Naive thymus-derived CD4-positive, alpha-beta T cell (primary cell): ENCODE measurements at regions of chr10 and their contacts with region 1.

Region 1: DNA sequence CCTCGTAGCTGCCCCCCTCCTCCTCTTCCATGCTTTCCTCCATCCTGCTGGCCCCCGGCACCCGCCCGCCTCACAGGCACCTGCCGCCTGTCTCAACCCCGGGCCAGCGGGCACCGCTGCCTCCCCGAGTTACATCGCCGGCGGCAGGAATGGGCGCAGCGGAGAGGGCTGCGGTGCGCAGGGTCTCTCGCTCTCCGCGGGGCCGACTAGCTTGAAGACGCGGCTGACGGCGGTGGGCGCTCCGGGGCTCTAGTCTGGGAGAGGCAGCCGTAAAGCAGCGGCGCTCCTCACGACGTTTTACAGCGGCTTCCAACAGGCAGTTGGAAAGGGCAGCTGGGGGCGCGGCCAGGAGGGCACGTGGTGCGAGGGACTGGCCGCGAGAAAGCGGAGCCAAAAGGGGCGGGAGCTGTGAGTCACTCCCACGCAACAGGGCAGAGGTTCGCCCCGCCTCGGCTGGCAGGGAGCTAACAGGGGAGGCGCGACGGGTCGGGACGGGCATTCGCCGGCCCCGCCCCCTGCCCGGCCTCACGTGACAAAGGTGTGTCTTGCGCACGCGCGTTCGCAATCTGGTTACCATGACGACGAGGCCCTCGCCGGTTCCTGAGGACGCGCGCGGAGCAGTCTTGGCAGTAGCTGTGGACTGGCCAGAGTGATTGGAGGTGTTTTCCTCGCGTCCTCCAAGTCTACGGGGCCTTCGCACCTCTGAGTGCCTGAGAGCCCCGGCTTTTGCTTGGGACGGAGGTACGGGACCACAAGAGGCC is at the start of gene CACUL1:
- DNase-seq: peak; percentile 99 to 100 (median 100)
- ATAC-seq: peak; percentile 99
- H3K4me3 ChIP-seq: peak within 1 kb of the TSS; percentile 92
- H3K4me3 Mint-ChIP-seq: peak within 1 kb of the TSS; percentile 92 to 98 (median 95)
- H3K27ac ChIP-seq: peak within 1 kb of the TSS; percentile 80
- H3K27ac Mint-ChIP-seq: peak within 1 kb of the TSS; percentile 86 to 96 (median 92)
- H3K4me1 ChIP-seq: peaks cover 17 to 24% of the 10 kb centered on the region in 2 donors
- H3K4me1 Mint-ChIP-seq: peaks cover 24 to 47% (median 40%) of the 10 kb centered on the region in 7 donors
- H3K27me3 ChIP-seq: no peaks in the 10 kb centered on the region
- H3K27me3 Mint-ChIP-seq: peaks cover 0 to 19% (median 0%) of the 10 kb centered on the region in 5 donors
- total RNA-seq, gene CACUL1: 28.0 to 66.6 (median 34.3) TPM

Region 2: GRCh38 chr10:118046395-118047156 is 708.3 kb before region 1 on chr10 and contains the start of gene RAB11FIP2:
- CTCF ChIA-PET with region 1: no interaction called
- POLR2A ChIA-PET with region 1: interaction called, 4 read pairs
- intact Hi-C with region 1: loop called (anchors 1 kb)
- DNase-seq: peak; percentile 92 to 98 (median 95)
- ATAC-seq: peak; percentile 97
- H3K4me3 ChIP-seq: peak within 1 kb of the TSS; percentile 81
- H3K4me3 Mint-ChIP-seq: peak within 1 kb of the TSS; percentile 84 to 95 (median 88)
- H3K27ac ChIP-seq: peak within 1 kb of the TSS; percentile 83
- H3K27ac Mint-ChIP-seq: peak within 1 kb of the TSS; percentile 77 to 94 (median 85)
- H3K4me1 ChIP-seq: peaks cover 18 to 19% of the 10 kb centered on the region in 2 donors
- H3K4me1 Mint-ChIP-seq: peaks cover 17 to 54% (median 49%) of the 10 kb centered on the region in 7 donors
- H3K27me3 ChIP-seq: no peaks in the 10 kb centered on the region
- H3K27me3 Mint-ChIP-seq: peaks cover 0 to 20% (median 0%) of the 10 kb centered on the region in 5 donors
- total RNA-seq, gene RAB11FIP2: 17.5 to 32.6 (median 21.6) TPM

Region 3: GRCh38 chr10:118698421-118698820 is 56.5 kb before region 1 on chr10:
- CTCF ChIA-PET with region 1: no interaction called
- POLR2A ChIA-PET with region 1: interaction called, 12 read pairs
- intact Hi-C with region 1: loop called (anchors 1 kb)
- DNase-seq: peak; percentile 35 to 92 (median 88)
- ATAC-seq: peak; percentile 100
- H3K4me3 ChIP-seq: peak overlapping the region; percentile 18
- H3K4me3 Mint-ChIP-seq: peak overlapping the region; percentile 71 to 93 (median 83)
- H3K27ac ChIP-seq: peak overlapping the region; percentile 57
- H3K27ac Mint-ChIP-seq: peak overlapping the region; percentile 73 to 95 (median 90)
- H3K4me1 ChIP-seq: peaks cover 15 to 40% of the 10 kb centered on the region in 2 donors
- H3K4me1 Mint-ChIP-seq: peaks cover 29 to 89% (median 74%) of the 10 kb centered on the region in 7 donors
- H3K27me3 ChIP-seq: no peaks in the 10 kb centered on the region
- H3K27me3 Mint-ChIP-seq: no peaks in the 10 kb centered on the region

Region 4: GRCh38 chr10:119080521-119081260 is 325.8 kb after region 1 on chr10 and contains the start of gene EIF3A:
- CTCF ChIA-PET with region 1: no interaction called
- POLR2A ChIA-PET with region 1: interaction called, 3 read pairs
- intact Hi-C with region 1: loop called in 1 of 2 experiments (anchors 1 kb)
- DNase-seq: peak; percentile 87 to 98 (median 93)
- ATAC-seq: peak; percentile 90
- H3K4me3 ChIP-seq: peak within 1 kb of the TSS; percentile 83
- H3K4me3 Mint-ChIP-seq: peak within 1 kb of the TSS; percentile 86 to 99 (median 98)
- H3K27ac ChIP-seq: peak within 1 kb of the TSS; percentile 91
- H3K27ac Mint-ChIP-seq: peak within 1 kb of the TSS; percentile 93 to 100 (median 98)
- H3K4me1 ChIP-seq: peaks cover 6 to 26% of the 10 kb centered on the region in 2 donors
- H3K4me1 Mint-ChIP-seq: peaks cover 28 to 55% (median 45%) of the 10 kb centered on the region in 7 donors
- H3K27me3 ChIP-seq: no peaks in the 10 kb centered on the region
- H3K27me3 Mint-ChIP-seq: peaks cover 0 to 2% (median 0%) of the 10 kb centered on the region in 5 donors
- total RNA-seq, gene EIF3A: 87.8 to 137 (median 96.0) TPM

Region 5: DNA sequence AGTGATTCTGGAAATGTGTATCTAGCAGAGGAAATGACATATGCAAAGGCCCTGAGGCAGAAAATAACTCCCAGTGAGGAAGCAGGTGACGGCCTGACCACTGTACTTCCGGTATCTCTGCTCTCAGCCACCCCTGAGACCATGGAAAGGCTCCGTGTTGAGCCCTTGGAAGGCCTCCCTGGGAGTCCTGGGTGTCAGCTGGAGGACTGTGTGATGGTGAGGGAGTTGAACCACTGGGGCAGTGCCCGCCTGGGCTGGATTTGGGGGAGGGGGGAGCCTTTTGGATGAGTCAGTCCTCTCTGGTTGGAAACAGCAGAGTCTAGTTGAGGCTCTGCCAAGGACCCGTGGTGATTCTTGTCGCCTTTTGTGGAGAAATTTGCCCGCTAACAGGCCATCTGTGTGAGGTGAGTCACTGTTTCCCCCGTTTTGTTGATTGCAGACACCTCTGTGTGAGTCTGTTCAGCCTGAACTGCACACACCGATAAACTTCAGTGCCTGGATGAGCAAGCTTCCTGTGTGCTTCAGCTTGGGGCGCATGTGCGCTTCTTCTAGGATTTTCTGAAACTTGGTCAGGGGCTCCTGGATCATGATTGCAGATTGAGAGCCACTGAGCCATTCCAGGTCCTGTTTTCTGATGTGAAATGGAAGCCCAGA is 551.1 kb after region 1 on chr10:
- CTCF ChIA-PET with region 1: no interaction called
- POLR2A ChIA-PET with region 1: no interaction called
- intact Hi-C with region 1: loop called in 1 of 2 experiments (anchors 1 kb)
- DNase-seq: peak; percentile 38 to 93 (median 70)
- ATAC-seq: peak; percentile 85
- H3K4me3 ChIP-seq: peak overlapping the region; percentile 65
- H3K4me3 Mint-ChIP-seq: peak overlapping the region; percentile 71 to 93 (median 90)
- H3K27ac ChIP-seq: peak overlapping the region; percentile 90
- H3K27ac Mint-ChIP-seq: peak overlapping the region; percentile 94 to 99 (median 97)
- H3K4me1 ChIP-seq: peaks cover 47 to 53% of the 10 kb centered on the region in 2 donors
- H3K4me1 Mint-ChIP-seq: peaks cover 50 to 87% (median 74%) of the 10 kb centered on the region in 7 donors
- H3K27me3 ChIP-seq: no peaks in the 10 kb centered on the region
- H3K27me3 Mint-ChIP-seq: peaks cover 0 to 2% (median 0%) of the 10 kb centered on the region in 5 donors

Region 6: GRCh38 chr10:119872860-119873681 is 1118.2 kb after region 1 on chr10:
- CTCF ChIA-PET with region 1: no interaction called
- POLR2A ChIA-PET with region 1: interaction called, 5 read pairs
- intact Hi-C with region 1: loop called (anchors 1 to 5 kb)
- DNase-seq: peak; percentile 81 to 88 (median 86)
- ATAC-seq: peak; percentile 96
- H3K4me3 ChIP-seq: peak overlapping the region; percentile 97
- H3K4me3 Mint-ChIP-seq: peak overlapping the region; percentile 82 to 92 (median 89)
- H3K27ac ChIP-seq: peak overlapping the region; percentile 84
- H3K27ac Mint-ChIP-seq: peak overlapping the region; percentile 79 to 95 (median 92)
- H3K4me1 ChIP-seq: peaks cover 21 to 28% of the 10 kb centered on the region in 2 donors
- H3K4me1 Mint-ChIP-seq: peaks cover 23 to 46% (median 41%) of the 10 kb centered on the region in 7 donors
- H3K27me3 ChIP-seq: no peaks in the 10 kb centered on the region
- H3K27me3 Mint-ChIP-seq: peaks cover 0 to 6% (median 0%) of the 10 kb centered on the region in 5 donors